ENCODE measurements at regions of chr7 and their contacts with region 1.

Region 1: GRCh38 chr7:116180302-116180701 is 30.0 kb upstream of the TES start:
- DNase-seq: peak; percentile 55 to 67 (median 63)
- H3K4me3 ChIP-seq: no peak overlapping the region
- H3K4me3 Mint-ChIP-seq: no peak overlapping the region
- H3K27ac ChIP-seq: no peak overlapping the region
- H3K27ac Mint-ChIP-seq: peak overlapping the region in 1 of 7 donors; percentile 53
- H3K4me1 ChIP-seq: no peaks in the 10 kb centered on the region
- H3K4me1 Mint-ChIP-seq: peaks cover 0 to 4% (median 4%) of the 10 kb centered on the region in 4 donors
- H3K27me3 ChIP-seq: no peaks in the 10 kb centered on the region
- H3K27me3 Mint-ChIP-seq: peaks cover 0 to 6% of the 10 kb centered on the region in 2 donors

Region 2: GRCh38 chr7:115805458-115805857 is 374.8 kb before region 1 on chr7:
- CTCF ChIA-PET with region 1: no interaction called
- POLR2A ChIA-PET with region 1: no interaction called
- intact Hi-C with region 1: no loop called
- DNase-seq: no peak
- H3K4me3 ChIP-seq: no peak overlapping the region
- H3K4me3 Mint-ChIP-seq: no peak overlapping the region
- H3K27ac ChIP-seq: no peak overlapping the region
- H3K27ac Mint-ChIP-seq: no peak overlapping the region
- H3K4me1 ChIP-seq: no peaks in the 10 kb centered on the region
- H3K4me1 Mint-ChIP-seq: no peaks in the 10 kb centered on the region
- H3K27me3 ChIP-seq: no peaks in the 10 kb centered on the region
- H3K27me3 Mint-ChIP-seq: peaks cover under 1 to 2% of the 10 kb centered on the region in 2 donors

Region 3: GRCh38 chr7:116111475-116111874 is 68.8 kb before region 1 on chr7:
- CTCF ChIA-PET with region 1: no interaction called
- POLR2A ChIA-PET with region 1: no interaction called
- intact Hi-C with region 1: no loop called
- DNase-seq: no peak
- H3K4me3 ChIP-seq: no peak overlapping the region
- H3K4me3 Mint-ChIP-seq: no peak overlapping the region
- H3K27ac ChIP-seq: no peak overlapping the region
- H3K27ac Mint-ChIP-seq: no peak overlapping the region
- H3K4me1 ChIP-seq: no peaks in the 10 kb centered on the region
- H3K4me1 Mint-ChIP-seq: no peaks in the 10 kb centered on the region
- H3K27me3 ChIP-seq: no peaks in the 10 kb centered on the region
- H3K27me3 Mint-ChIP-seq: peaks cover 2 to 3% of the 10 kb centered on the region in 2 donors

Region 4: DNA sequence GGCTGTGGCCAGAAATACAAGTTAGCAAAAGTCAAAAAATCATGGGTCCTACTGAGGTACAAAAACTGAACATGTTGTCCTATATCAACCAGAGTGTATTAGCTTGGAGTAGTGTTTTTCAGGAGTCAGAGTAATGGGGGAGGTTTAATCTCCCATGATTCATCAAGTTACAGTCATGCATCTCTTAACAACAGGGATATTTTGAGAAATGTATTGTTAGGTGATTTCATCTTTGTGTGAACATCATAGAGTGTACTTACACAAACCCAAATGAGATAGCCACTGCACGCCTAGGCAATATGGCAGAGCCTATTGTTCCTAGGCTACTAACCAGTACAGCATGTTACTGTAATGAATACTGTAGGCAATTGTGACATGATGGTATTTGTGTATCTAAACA is 15.1 kb after region 1 on chr7:
- CTCF ChIA-PET with region 1: interaction called, 20 read pairs
- POLR2A ChIA-PET with region 1: no interaction called
- intact Hi-C with region 1: no loop called
- DNase-seq: no peak
- H3K4me3 ChIP-seq: no peak overlapping the region
- H3K4me3 Mint-ChIP-seq: no peak overlapping the region
- H3K27ac ChIP-seq: no peak overlapping the region
- H3K27ac Mint-ChIP-seq: no peak overlapping the region
- H3K4me1 ChIP-seq: no peaks in the 10 kb centered on the region
- H3K4me1 Mint-ChIP-seq: no peaks in the 10 kb centered on the region
- H3K27me3 ChIP-seq: no peaks in the 10 kb centered on the region
- H3K27me3 Mint-ChIP-seq: peaks cover 4% of the 10 kb centered on the region in 2 donors

Region 5: GRCh38 chr7:116211006-116211912 is 31.0 kb after region 1 on chr7:
- CTCF ChIA-PET with region 1: interaction called, 55 read pairs
- POLR2A ChIA-PET with region 1: interaction called, 39 read pairs
- intact Hi-C with region 1: loop called (anchors 1 kb)
- DNase-seq: peak; percentile 80 to 93 (median 85)
- H3K4me3 ChIP-seq: peak overlapping the region; percentile 62 to 82
- H3K4me3 Mint-ChIP-seq: peak overlapping the region; percentile 93 to 98 (median 98)
- H3K27ac ChIP-seq: peak overlapping the region; percentile 92
- H3K27ac Mint-ChIP-seq: peak overlapping the region; percentile 96 to 99 (median 98)
- H3K4me1 ChIP-seq: peaks cover 56% of the 10 kb centered on the region
- H3K4me1 Mint-ChIP-seq: peaks cover 49 to 62% (median 56%) of the 10 kb centered on the region in 4 donors
- H3K27me3 ChIP-seq: no peaks in the 10 kb centered on the region
- H3K27me3 Mint-ChIP-seq: no peaks in the 10 kb centered on the region

Region 6: GRCh38 chr7:116224492-116225098 is 44.3 kb after region 1 on chr7:
- CTCF ChIA-PET with region 1: interaction called, 409 read pairs
- POLR2A ChIA-PET with region 1: interaction called, 5 read pairs
- intact Hi-C with region 1: no loop called
- DNase-seq: peak in 2 of 5 donors; percentile 21 to 57
- H3K4me3 ChIP-seq: no peak overlapping the region
- H3K4me3 Mint-ChIP-seq: peak overlapping the region; percentile 11 to 83 (median 64)
- H3K27ac ChIP-seq: no peak overlapping the region
- H3K27ac Mint-ChIP-seq: peak overlapping the region; percentile 38 to 79 (median 74)
- H3K4me1 ChIP-seq: peaks cover 93% of the 10 kb centered on the region
- H3K4me1 Mint-ChIP-seq: peaks cover 74 to 93% (median 80%) of the 10 kb centered on the region in 4 donors
- H3K27me3 ChIP-seq: no peaks in the 10 kb centered on the region
- H3K27me3 Mint-ChIP-seq: no peaks in the 10 kb centered on the region

Region 7: GRCh38 chr7:116249708-116250553 is 69.6 kb after region 1 on chr7:
- CTCF ChIA-PET with region 1: interaction called, 11 read pairs
- POLR2A ChIA-PET with region 1: no interaction called
- intact Hi-C with region 1: no loop called
- DNase-seq: no peak
- H3K4me3 ChIP-seq: no peak overlapping the region
- H3K4me3 Mint-ChIP-seq: peak overlapping the region in 1 of 8 donors; percentile 26
- H3K27ac ChIP-seq: no peak overlapping the region
- H3K27ac Mint-ChIP-seq: peak overlapping the region in 6 of 7 donors; percentile 43 to 86 (median 62)
- H3K4me1 ChIP-seq: peaks cover 3% of the 10 kb centered on the region
- H3K4me1 Mint-ChIP-seq: peaks cover 32 to 42% (median 36%) of the 10 kb centered on the region in 4 donors
- H3K27me3 ChIP-seq: no peaks in the 10 kb centered on the region
- H3K27me3 Mint-ChIP-seq: no peaks in the 10 kb centered on the region

Region 8: DNA sequence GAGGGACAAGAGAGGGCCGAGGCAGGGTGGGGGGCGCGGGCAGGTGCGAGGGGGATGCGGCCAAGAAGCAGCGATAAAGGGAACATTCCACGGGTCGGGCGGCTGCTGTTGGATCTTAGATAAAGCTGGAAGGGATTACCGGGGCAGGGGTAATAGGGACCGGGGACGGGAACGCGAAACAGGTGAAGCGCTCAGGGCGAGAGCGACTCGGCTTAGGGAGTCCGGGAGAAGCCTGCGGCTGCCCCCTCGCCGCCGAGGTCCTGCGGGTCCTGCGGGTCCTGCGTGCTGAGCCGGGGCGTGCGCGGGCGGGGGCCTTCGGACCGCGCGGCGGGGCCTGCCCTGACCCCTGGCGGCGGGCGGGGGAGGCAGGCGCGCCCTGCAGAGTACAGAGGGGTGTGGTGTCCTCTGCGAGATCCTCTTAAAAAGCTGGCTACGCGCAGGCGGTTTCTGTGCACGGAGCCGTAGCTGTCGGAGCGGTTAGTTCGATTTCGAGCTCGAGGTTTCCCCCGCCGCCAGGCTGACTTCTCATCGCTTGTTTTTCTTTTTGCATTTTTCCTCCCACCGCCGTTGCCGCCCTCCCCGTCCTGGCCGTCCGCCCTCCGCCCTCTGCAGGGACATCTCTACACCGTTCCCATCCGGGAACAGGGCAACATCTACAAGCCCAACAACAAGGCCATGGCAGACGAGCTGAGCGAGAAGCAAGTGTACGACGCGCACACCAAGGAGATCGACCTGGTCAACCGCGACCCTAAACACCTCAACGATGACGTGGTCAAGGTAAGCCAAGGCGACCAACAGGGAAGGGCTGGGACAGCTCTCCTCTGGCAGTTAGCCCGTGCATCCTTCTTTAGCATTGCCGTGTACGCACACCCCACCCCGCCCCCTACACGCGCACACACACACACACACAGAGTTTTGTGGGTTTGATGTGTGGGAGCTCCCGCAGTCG is 345.9 kb after region 1 on chr7:
- CTCF ChIA-PET with region 1: interaction called, 11 read pairs
- POLR2A ChIA-PET with region 1: no interaction called
- intact Hi-C with region 1: no loop called
- DNase-seq: peak; percentile 50 to 67 (median 63)
- H3K4me3 ChIP-seq: peak overlapping the region in 1 of 2 donors; percentile 35
- H3K4me3 Mint-ChIP-seq: peak overlapping the region; percentile 80 to 94 (median 87)
- H3K27ac ChIP-seq: no peak overlapping the region
- H3K27ac Mint-ChIP-seq: no peak overlapping the region
- H3K4me1 ChIP-seq: peaks cover 22% of the 10 kb centered on the region
- H3K4me1 Mint-ChIP-seq: peaks cover 12 to 30% (median 22%) of the 10 kb centered on the region in 4 donors
- H3K27me3 ChIP-seq: peaks cover 29% of the 10 kb centered on the region
- H3K27me3 Mint-ChIP-seq: peaks cover 53 to 60% of the 10 kb centered on the region in 2 donors